ENCODE measurements at regions of chr3 and their contacts with region 1.

Region 1: DNA sequence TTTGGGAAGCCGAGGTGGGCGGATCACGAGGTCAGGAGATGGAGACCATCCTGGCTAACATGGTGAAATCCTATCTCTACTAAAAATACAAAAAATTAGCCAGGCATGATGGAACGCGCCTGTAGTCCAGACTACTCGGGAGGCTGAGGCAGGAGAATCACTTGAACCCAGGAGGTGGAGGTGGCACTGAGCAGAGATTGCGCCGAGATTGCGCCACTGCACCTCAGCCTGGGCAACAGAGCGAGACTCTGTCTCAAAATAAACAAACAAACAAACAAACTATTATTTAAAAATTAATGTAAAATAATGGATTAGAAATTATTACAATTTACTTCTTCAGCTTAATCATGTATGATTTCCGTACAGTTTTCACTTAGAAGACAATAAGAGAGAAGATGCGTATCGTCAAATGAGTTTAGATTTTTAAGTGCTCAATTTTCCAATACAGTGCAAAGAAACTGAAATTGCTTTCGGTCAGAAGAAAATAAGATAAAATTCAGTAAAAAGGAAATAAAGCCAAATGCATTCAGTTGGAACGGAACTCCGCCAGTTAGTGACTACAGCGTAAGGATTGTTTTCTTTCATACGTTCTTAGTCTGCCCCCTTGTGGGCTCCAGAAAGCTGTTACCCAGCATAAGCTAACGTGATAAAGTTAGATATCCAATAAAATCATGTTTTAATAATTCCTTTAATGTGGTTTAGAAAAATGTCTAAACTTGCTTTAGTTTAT is 24.8 kb downstream of the AADAC start:
- DNase-seq: peak; percentile 61
- ATAC-seq: peak; percentile 88
- H3K4me3 Mint-ChIP-seq: no peak overlapping the region
- H3K27ac Mint-ChIP-seq: no peak overlapping the region
- H3K4me1 Mint-ChIP-seq: no peaks in the 10 kb centered on the region
- H3K27me3 Mint-ChIP-seq: peaks cover 30% of the 10 kb centered on the region

Region 2: GRCh38 chr3:151468284-151468917 is 370.3 kb before region 1 on chr3:
- CTCF ChIA-PET with region 1: interaction called, 22 read pairs
- POLR2A ChIA-PET with region 1: no interaction called
- DNase-seq: peak; percentile 53
- ATAC-seq: peak; percentile 83
- H3K4me3 Mint-ChIP-seq: no peak overlapping the region
- H3K27ac Mint-ChIP-seq: no peak overlapping the region
- H3K4me1 Mint-ChIP-seq: no peaks in the 10 kb centered on the region
- H3K27me3 Mint-ChIP-seq: peaks cover 9% of the 10 kb centered on the region